H1 (cell line): ENCODE measurements at regions of chr6 and their contacts with region 1.

Region 1: GRCh38 chr6:31068669-31069340 is 43.6 kb downstream of the C6orf15 start:
- DNase-seq: peak; percentile 36 to 90
- H3K4me3 ChIP-seq: no peak overlapping the region
- H3K27ac ChIP-seq: no peak overlapping the region; the same call in 1 of the 2 replicates
- H3K4me1 ChIP-seq: peaks cover 3 to 15% (median 7%) of the 10 kb centered on the region in 4 experiments; a peak in 6 of 7 replicates
- H3K27me3 ChIP-seq: no peaks in the 10 kb centered on the region
- CTCF ChIP-seq: peak; percentile 83 to 98 (median 96)
- EP300 ChIP-seq: no peak
- POLR2A ChIP-seq: no peak
- RAD21 ChIP-seq: peak; percentile 75 to 76

Region 2: GRCh38 chr6:30821862-30822782 is 246.7 kb before region 1 on chr6:
- CTCF ChIA-PET with region 1: interaction called, 22 read pairs
- POLR2A ChIA-PET with region 1: interaction called, 4 read pairs
- DNase-seq: no peak
- H3K4me3 ChIP-seq: no peak overlapping the region
- H3K27ac ChIP-seq: no peak overlapping the region
- H3K4me1 ChIP-seq: peaks cover 0 to 3% (median 0%) of the 10 kb centered on the region in 4 experiments; a peak in 1 of 7 replicates
- H3K27me3 ChIP-seq: no peaks in the 10 kb centered on the region
- CTCF ChIP-seq: peak in 2 of 3 experiments; percentile 28 to 30; a peak in 2 of 4 replicates
- EP300 ChIP-seq: no peak
- POLR2A ChIP-seq: no peak
- RAD21 ChIP-seq: peak; percentile 27 to 42; a peak in 3 of 4 replicates

Region 3: GRCh38 chr6:30926644-30927043 is 142.2 kb before region 1 on chr6:
- CTCF ChIA-PET with region 1: interaction called, 10 read pairs
- POLR2A ChIA-PET with region 1: interaction called, 3 read pairs
- DNase-seq: no peak
- H3K4me3 ChIP-seq: no peak overlapping the region
- H3K27ac ChIP-seq: no peak overlapping the region
- H3K4me1 ChIP-seq: peaks cover 0 to 3% (median under 1%) of the 10 kb centered on the region in 4 experiments; a peak in 2 of 7 replicates
- H3K27me3 ChIP-seq: no peaks in the 10 kb centered on the region
- CTCF ChIP-seq: no peak
- EP300 ChIP-seq: no peak
- POLR2A ChIP-seq: no peak
- RAD21 ChIP-seq: no peak

Region 4: DNA sequence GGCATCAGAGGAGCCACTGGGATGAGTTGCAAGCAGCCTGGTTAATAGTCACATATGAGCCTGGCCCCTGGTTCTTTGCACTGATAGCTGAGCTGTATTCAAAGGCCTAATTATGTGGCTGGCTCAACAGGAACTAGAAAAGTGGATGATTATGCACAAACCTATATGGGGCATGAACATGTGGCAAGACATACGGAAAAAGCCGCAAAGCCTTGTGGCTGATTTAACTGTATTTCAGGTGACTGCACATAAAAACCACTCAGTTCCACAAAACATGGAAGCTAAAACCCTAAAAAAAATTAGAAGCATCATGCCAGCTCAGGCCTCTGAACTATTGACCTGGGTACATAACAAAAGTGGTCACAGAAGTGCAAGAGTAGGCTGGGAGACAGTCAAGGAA is 71.5 kb before region 1 on chr6:
- CTCF ChIA-PET with region 1: no interaction called
- POLR2A ChIA-PET with region 1: no interaction called
- DNase-seq: no peak
- H3K4me3 ChIP-seq: no peak overlapping the region
- H3K27ac ChIP-seq: no peak overlapping the region
- H3K4me1 ChIP-seq: no peaks in the 10 kb centered on the region
- H3K27me3 ChIP-seq: no peaks in the 10 kb centered on the region
- CTCF ChIP-seq: no peak
- EP300 ChIP-seq: no peak
- POLR2A ChIP-seq: no peak
- RAD21 ChIP-seq: no peak

Region 5: GRCh38 chr6:31037682-31038081 is 31.1 kb before region 1 on chr6:
- CTCF ChIA-PET with region 1: interaction called, 21 read pairs
- POLR2A ChIA-PET with region 1: no interaction called
- DNase-seq: no peak
- H3K4me3 ChIP-seq: no peak overlapping the region
- H3K27ac ChIP-seq: no peak overlapping the region
- H3K4me1 ChIP-seq: no peaks in the 10 kb centered on the region
- H3K27me3 ChIP-seq: no peaks in the 10 kb centered on the region
- CTCF ChIP-seq: no peak
- EP300 ChIP-seq: no peak
- POLR2A ChIP-seq: no peak
- RAD21 ChIP-seq: no peak

Region 6: GRCh38 chr6:31058128-31058894 is 10.5 kb before region 1 on chr6:
- CTCF ChIA-PET with region 1: interaction called, 53 read pairs
- POLR2A ChIA-PET with region 1: interaction called, 3 read pairs
- DNase-seq: no peak
- H3K4me3 ChIP-seq: no peak overlapping the region
- H3K27ac ChIP-seq: no peak overlapping the region
- H3K4me1 ChIP-seq: no peaks in the 10 kb centered on the region; a peak in 1 of 7 replicates
- H3K27me3 ChIP-seq: no peaks in the 10 kb centered on the region
- CTCF ChIP-seq: peak in 2 of 3 experiments; percentile 14 to 57; a peak in 2 of 4 replicates
- EP300 ChIP-seq: no peak
- POLR2A ChIP-seq: no peak
- RAD21 ChIP-seq: peak in 1 of 2 experiments; percentile 11; a peak in 1 of 4 replicates